ENCODE measurements at regions of chr3 and their contacts with region 1.

Region 1: GRCh38 chr3:13932578-13933295 is 52.9 kb upstream of the WNT7A start:
- DNase-seq: no peak
- H3K4me3 ChIP-seq: peak overlapping the region; percentile 39 to 71 (median 56)
- H3K27ac ChIP-seq: no peak overlapping the region
- H3K4me1 ChIP-seq: no peaks in the 10 kb centered on the region
- H3K27me3 ChIP-seq: peaks cover 0 to 7% of the 10 kb centered on the region in 2 donors
- CTCF ChIP-seq: no peak
- POLR2A ChIP-seq: no peak

Region 2: DNA sequence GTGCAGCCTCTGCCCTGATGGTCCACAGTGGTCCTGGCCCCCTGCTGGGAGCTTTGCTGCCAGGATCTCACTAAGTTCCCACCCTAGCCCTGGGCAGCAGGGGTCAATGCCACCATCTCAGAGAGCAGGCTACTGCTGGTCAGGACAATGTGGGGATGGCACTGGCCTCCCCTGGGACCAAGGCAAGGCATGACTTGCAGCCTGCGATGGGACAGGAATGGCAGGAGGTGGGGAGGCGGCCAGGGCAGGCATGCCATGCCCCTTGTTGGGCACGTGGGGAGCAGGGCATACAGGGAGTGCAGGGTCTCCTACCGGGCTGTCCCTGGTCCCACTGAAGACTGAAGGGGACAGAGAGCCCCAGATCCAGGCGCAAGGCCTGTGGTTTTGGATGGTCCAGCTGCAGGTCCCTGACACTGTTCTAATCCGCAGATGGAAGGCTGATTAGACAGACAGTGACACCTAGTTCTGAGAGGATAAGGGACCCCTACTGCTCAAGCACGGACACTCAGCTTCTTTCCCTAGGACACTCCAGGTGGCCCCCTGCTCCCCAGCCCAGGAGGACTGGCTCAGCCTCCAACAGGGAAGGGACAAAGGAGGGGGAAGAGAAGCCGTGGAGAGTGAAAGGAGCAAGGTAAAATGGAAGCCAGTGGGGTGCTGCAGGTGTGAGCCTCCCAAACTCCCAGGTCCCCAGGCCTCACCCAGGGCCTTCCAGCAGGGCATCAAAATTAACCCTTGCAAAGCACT is 1022.2 kb before region 1 on chr3:
- intact Hi-C with region 1: loop called (anchors 5 kb)
- DNase-seq: no peak
- H3K4me3 ChIP-seq: no peak overlapping the region
- H3K27ac ChIP-seq: no peak overlapping the region
- H3K4me1 ChIP-seq: no peaks in the 10 kb centered on the region
- H3K27me3 ChIP-seq: no peaks in the 10 kb centered on the region
- CTCF ChIP-seq: no peak
- POLR2A ChIP-seq: no peak

Region 3: GRCh38 chr3:13850158-13850945 is 82.4 kb before region 1 on chr3:
- intact Hi-C with region 1: no loop called
- DNase-seq: no peak
- H3K4me3 ChIP-seq: no peak overlapping the region
- H3K27ac ChIP-seq: no peak overlapping the region
- H3K4me1 ChIP-seq: no peaks in the 10 kb centered on the region
- H3K27me3 ChIP-seq: peaks cover 0 to 27% of the 10 kb centered on the region in 2 donors
- CTCF ChIP-seq: no peak
- POLR2A ChIP-seq: no peak

Measured in breast epithelium (tissue), 4 donors.